ENCODE measurements at regions of chr12 and their contacts with region 1.

Region 1: DNA sequence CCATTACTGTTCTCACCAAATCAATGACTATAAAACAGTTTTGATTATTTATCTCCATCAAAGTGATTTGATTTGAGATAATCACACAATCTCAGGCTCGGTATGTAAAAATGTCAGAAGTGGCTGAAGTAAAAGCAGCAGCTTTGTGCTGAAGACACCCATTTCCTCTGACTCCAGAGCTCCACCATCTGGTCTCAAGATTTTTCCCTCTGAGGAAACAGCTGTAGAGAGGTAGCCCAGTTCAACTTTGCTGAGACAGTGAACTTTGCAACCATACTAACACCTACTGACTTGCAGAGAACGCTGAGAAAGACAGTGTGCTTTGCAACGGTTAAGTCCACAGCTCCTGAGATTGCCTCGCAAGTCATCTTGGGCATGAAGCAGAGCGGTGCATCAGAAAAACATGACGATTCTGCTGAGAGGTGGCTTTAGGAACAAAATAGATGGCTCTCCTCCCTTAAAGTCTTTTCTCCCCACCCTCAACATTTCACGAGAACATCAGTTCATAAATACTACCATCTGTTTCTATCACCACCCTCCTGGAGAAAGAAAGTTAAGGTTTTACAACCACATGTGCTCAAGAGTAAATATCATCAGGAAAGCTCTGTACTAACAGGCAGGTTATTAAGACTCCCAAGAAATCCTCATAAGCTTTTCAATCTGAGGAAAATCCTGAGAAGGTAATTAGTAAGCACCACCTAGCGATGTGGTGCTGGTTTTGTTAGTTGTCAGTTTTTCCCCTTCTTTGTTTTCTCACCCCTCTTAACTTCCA is 34.8 kb downstream of the HIGD1C start:
- DNase-seq: no peak
- ATAC-seq: peak; percentile 86
- H3K4me3 Mint-ChIP-seq: no peak overlapping the region
- H3K27ac Mint-ChIP-seq: no peak overlapping the region
- H3K4me1 Mint-ChIP-seq: peaks cover 6% of the 10 kb centered on the region
- H3K27me3 Mint-ChIP-seq: no peaks in the 10 kb centered on the region

Region 2: GRCh38 chr12:50825372-50825838 is 161.7 kb before region 1 on chr12:
- POLR2A ChIA-PET with region 1: interaction called, 11 read pairs
- DNase-seq: no peak
- ATAC-seq: peak; percentile 76
- H3K4me3 Mint-ChIP-seq: no peak overlapping the region
- H3K27ac Mint-ChIP-seq: peak overlapping the region; percentile 37
- H3K4me1 Mint-ChIP-seq: peaks cover 4% of the 10 kb centered on the region
- H3K27me3 Mint-ChIP-seq: no peaks in the 10 kb centered on the region

Region 3: GRCh38 chr12:50934981-50935807 is 52.0 kb before region 1 on chr12:
- POLR2A ChIA-PET with region 1: no interaction called
- DNase-seq: no peak
- ATAC-seq: no peak
- H3K4me3 Mint-ChIP-seq: no peak overlapping the region
- H3K27ac Mint-ChIP-seq: no peak overlapping the region
- H3K4me1 Mint-ChIP-seq: peaks cover 2% of the 10 kb centered on the region
- H3K27me3 Mint-ChIP-seq: no peaks in the 10 kb centered on the region

Region 4: DNA sequence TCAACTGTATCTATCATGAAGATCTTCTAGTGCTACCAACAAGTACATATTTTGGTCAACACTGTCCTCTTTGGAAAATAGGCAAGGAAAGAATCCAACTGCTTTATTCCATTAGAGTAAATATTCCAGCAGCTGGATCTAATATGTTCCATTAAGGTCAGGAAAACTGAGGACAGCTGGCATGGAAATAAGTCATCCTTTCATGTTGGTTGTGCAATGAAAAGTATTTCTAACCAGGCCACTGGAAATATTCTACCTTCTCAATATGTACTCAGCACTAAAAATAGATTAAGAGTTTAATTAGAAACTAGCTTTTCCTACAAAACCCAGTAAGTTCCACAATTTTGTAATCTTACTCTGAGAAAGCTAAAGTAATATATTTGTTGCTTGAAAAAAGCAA is 15.2 kb before region 1 on chr12:
- POLR2A ChIA-PET with region 1: no interaction called
- DNase-seq: no peak
- ATAC-seq: no peak
- H3K4me3 Mint-ChIP-seq: no peak overlapping the region
- H3K27ac Mint-ChIP-seq: no peak overlapping the region
- H3K4me1 Mint-ChIP-seq: no peaks in the 10 kb centered on the region
- H3K27me3 Mint-ChIP-seq: no peaks in the 10 kb centered on the region

Measured in activated naive CD8-positive, alpha-beta T cell treated with anti-CD3 and anti-CD28 coated beads, Interleukin-2, amount 10 ng/mL, durations not matched to agents 7 days and 5 days (primary cell).